ENCODE measurements at regions of chr7 and their contacts with region 1.

Region 1: DNA sequence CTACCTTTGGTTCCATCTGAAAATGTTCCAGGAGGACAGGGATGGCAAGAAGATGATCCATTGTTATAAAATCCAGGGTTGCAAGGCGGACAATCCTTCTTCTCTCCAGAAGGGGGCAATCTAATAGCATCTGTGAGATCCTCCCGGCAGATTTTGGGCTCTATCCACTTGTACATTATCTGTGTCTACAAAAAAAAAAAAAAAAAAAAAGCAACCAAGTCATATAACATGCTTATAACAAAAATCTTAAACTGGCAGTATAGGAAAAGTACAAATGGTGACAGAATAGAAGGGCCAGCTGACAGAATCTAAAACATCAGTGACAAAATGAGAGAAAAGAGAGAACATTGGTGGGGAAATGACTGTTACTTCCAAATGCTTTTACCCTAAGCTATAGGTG is 132.7 kb downstream of the ELAPOR2 start:
- DNase-seq: no peak
- ATAC-seq: peak in 3 of 4 donors; percentile 40 to 70 (median 64)
- H3K4me3 ChIP-seq: no peak overlapping the region
- H3K27ac ChIP-seq: no peak overlapping the region
- H3K4me1 ChIP-seq: peaks cover 1% of the 10 kb centered on the region
- H3K27me3 ChIP-seq: no peaks in the 10 kb centered on the region
- CTCF ChIP-seq: peak; percentile 70

Region 2: GRCh38 chr7:87234949-87235348 is 308.2 kb after region 1 on chr7:
- intact Hi-C with region 1: loop called in 1 of 2 experiments (anchors 5 kb)
- DNase-seq: no peak
- ATAC-seq: no peak
- H3K4me3 ChIP-seq: no peak overlapping the region
- H3K27ac ChIP-seq: no peak overlapping the region
- H3K4me1 ChIP-seq: peaks cover 3% of the 10 kb centered on the region
- H3K27me3 ChIP-seq: no peaks in the 10 kb centered on the region
- CTCF ChIP-seq: no peak

Measured in psoas muscle (tissue), 8 donors.